Activated B cell treated with CpG ODN at 0.5 μM for 24 hours (primary cell): ENCODE measurements at regions of chr1 and their contacts with region 1.

Region 1: GRCh38 chr1:70410604-70411359 is at the start of gene CTH:
- DNase-seq: peak; percentile 90
- ATAC-seq: peak; percentile 97
- H3K4me3 Mint-ChIP-seq: peak within 1 kb of the TSS; percentile 95
- H3K27ac Mint-ChIP-seq: peak within 1 kb of the TSS; percentile 98
- H3K4me1 Mint-ChIP-seq: peaks cover 26% of the 10 kb centered on the region
- H3K27me3 Mint-ChIP-seq: peaks cover 11% of the 10 kb centered on the region
- CTCF ChIP-seq: no peak
- total RNA-seq, gene CTH: 4.3 TPM in 2 replicates

Region 2: DNA sequence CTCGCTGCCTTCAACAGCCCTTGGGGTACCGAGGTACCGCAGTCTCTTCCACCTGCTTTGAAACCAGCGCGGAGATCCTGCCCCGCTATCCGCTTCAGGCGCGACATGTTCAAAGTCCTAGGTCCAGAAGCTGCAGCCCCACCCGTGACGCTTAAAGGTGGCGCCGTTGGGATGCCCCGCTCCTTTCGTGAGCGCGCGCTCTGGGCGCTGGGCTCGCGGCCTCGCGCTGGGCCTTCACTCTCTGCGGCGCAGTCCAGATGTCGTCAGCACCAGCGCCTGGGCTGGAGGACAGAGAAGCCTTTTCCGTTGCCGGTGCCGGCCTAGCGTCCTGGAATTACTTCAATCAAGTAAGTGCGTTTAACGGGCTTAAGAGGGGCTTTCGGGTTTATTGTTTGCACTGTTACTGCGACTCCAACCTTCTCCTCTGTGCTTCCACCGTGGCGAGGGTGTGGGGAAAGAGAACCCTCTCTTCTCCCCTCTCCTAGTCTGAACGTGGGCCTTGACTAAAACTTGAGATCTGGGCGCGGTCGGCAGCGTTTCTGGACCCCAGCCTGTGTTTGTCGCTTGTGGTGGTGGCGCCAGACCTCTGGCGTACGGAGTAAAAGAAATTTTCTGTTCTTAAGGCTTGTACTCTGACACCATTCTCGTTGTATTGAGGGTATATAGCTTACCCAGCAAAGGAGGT is 205.2 kb before region 1 on chr1 and contains the start of gene LRRC40:
- CTCF ChIA-PET with region 1: no interaction called
- POLR2A ChIA-PET with region 1: interaction called, 8 read pairs
- intact Hi-C with region 1: loop called (anchors 1 kb)
- DNase-seq: peak; percentile 98
- ATAC-seq: peak; percentile 96
- H3K4me3 Mint-ChIP-seq: peak within 1 kb of the TSS; percentile 99
- H3K27ac Mint-ChIP-seq: peak within 1 kb of the TSS; percentile 97
- H3K4me1 Mint-ChIP-seq: peaks cover 73% of the 10 kb centered on the region
- H3K27me3 Mint-ChIP-seq: no peaks in the 10 kb centered on the region
- CTCF ChIP-seq: no peak
- total RNA-seq, gene LRRC40: 15.8 and 16.7 TPM in 2 replicates

Region 3: DNA sequence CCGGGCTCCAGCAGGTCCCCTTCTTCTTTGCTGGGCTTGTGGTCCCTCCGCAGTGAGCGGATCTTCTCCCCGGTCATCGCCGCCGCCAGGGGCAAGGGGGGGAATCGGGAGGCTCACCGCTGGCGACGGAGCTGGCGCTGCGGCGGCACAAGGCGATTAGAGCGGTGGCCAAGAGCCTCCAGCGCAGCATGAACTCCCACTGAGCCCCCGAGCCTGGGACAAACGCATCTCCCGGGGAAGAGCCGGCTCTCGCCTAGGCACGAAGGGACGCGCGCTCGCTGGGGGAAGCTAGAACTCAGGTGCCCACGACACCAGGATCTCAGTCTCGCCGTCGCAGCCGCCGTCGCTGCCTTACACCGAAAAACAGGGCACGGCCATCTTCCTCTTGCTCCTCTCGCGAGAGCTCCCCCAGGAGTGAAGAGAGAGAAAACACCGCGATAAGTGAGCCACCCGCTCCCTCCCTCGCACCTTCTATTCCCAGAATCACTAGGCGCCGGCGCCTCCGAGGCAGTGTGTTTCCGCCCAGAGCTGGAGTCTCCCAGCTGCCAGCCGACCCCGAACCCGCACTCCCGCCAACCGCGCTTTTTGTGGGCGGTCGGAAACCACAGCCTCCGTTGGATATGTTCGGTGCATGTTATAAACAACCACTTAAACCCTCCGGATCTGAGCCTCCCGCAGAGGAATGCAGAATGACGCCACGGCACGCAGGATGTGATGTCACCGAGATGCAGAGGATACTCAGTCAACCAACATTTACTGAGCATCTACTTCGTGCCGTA is 56.3 kb before region 1 on chr1 and contains the start of gene ANKRD13C:
- CTCF ChIA-PET with region 1: interaction called, 7 read pairs
- POLR2A ChIA-PET with region 1: interaction called, 83 read pairs
- intact Hi-C with region 1: loop called (anchors 1 kb)
- DNase-seq: peak; percentile 74
- ATAC-seq: peak; percentile 93
- H3K4me3 Mint-ChIP-seq: peak within 1 kb of the TSS; percentile 99
- H3K27ac Mint-ChIP-seq: peak within 1 kb of the TSS; percentile 98
- H3K4me1 Mint-ChIP-seq: peaks cover 44% of the 10 kb centered on the region
- H3K27me3 Mint-ChIP-seq: no peaks in the 10 kb centered on the region
- CTCF ChIP-seq: no peak
- total RNA-seq, gene ANKRD13C: 20.9 and 21.2 TPM in 2 replicates

Region 4: GRCh38 chr1:70462611-70463010 is 51.8 kb after region 1 on chr1:
- CTCF ChIA-PET with region 1: no interaction called
- POLR2A ChIA-PET with region 1: no interaction called
- intact Hi-C with region 1: no loop called
- DNase-seq: no peak
- ATAC-seq: no peak
- H3K4me3 Mint-ChIP-seq: no peak overlapping the region
- H3K27ac Mint-ChIP-seq: no peak overlapping the region
- H3K4me1 Mint-ChIP-seq: no peaks in the 10 kb centered on the region
- H3K27me3 Mint-ChIP-seq: peaks cover 9% of the 10 kb centered on the region
- CTCF ChIP-seq: no peak

Region 5: GRCh38 chr1:71154429-71154828 is 743.6 kb after region 1 on chr1:
- CTCF ChIA-PET with region 1: no interaction called
- POLR2A ChIA-PET with region 1: no interaction called
- intact Hi-C with region 1: no loop called
- DNase-seq: no peak
- ATAC-seq: no peak
- H3K4me3 Mint-ChIP-seq: no peak overlapping the region
- H3K27ac Mint-ChIP-seq: no peak overlapping the region
- H3K4me1 Mint-ChIP-seq: no peaks in the 10 kb centered on the region
- H3K27me3 Mint-ChIP-seq: no peaks in the 10 kb centered on the region
- CTCF ChIP-seq: no peak